Breast epithelium (tissue), 4 donors: ENCODE measurements at regions of chr2 and their contacts with region 1.

Region 1: DNA sequence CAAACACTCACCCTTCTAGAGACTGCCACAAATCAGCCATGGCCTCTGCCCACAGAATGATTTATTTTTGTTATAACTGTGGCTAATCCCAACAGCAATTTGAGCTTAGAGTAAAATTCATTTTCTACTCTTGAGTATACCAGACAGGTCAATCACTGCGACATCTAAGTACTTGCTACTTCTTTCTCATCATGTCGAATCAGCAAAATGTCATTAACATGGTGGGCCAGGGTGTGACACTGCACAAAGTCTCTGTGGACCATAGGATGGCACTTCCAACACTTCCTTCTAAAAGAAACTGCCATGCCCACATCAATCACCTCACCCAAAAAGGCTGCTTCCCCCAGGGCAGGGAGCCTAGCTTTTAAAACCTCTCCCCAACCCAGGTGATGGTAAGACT is 64.4 kb downstream of the KCNG3 start:
- DNase-seq: no peak
- H3K4me3 ChIP-seq: no peak overlapping the region
- H3K27ac ChIP-seq: no peak overlapping the region
- H3K4me1 ChIP-seq: no peaks in the 10 kb centered on the region
- H3K27me3 ChIP-seq: no peaks in the 10 kb centered on the region
- CTCF ChIP-seq: no peak
- POLR2A ChIP-seq: no peak

Region 2: DNA sequence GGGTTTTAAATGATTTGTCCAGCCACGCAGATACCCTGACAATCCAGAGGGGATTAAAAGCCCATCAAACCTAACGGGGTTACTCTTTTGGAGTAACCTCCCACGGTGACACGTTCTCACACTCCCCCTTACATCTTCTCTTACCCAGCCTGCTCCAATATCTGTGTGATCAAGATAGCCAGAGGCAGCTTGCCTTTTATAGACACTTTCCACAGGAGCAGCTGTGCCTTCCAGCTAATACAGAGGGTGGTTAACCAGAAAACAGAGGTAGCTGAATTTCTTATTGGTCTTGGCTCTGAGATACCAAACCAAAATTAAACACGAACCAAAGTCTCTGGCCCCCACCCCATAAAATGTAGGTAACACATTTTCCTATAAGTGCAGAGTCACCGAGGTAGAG is 614.4 kb before region 1 on chr2:
- intact Hi-C with region 1: no loop called
- DNase-seq: no peak
- H3K4me3 ChIP-seq: no peak overlapping the region
- H3K27ac ChIP-seq: no peak overlapping the region
- H3K4me1 ChIP-seq: no peaks in the 10 kb centered on the region
- H3K27me3 ChIP-seq: no peaks in the 10 kb centered on the region
- CTCF ChIP-seq: no peak
- POLR2A ChIP-seq: no peak

Region 3: GRCh38 chr2:41869542-41870264 is 559.6 kb before region 1 on chr2:
- intact Hi-C with region 1: no loop called
- DNase-seq: peak; percentile 41 to 73
- H3K4me3 ChIP-seq: no peak overlapping the region
- H3K27ac ChIP-seq: no peak overlapping the region
- H3K4me1 ChIP-seq: no peaks in the 10 kb centered on the region
- H3K27me3 ChIP-seq: no peaks in the 10 kb centered on the region
- CTCF ChIP-seq: peak; percentile 54 to 89 (median 86)
- POLR2A ChIP-seq: no peak

Region 4: DNA sequence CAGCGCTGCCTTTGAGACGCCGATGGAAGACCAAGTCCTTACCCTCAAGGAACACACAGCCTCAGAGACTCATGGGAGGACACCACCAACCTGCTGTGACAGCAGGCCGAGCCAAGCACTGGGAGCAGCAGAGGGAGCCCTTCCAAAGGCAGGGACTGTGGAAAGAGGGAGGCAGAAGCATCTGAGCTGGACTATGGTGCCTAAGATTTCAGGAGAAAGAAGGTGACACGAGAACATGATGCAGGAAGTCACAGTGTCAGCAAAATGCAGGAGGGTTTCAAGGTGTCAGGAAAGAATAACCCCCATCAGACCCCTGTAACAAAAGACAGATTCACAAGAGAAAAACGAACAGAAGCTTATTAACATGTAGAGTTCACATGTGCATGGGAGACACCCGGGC is 44.1 kb before region 1 on chr2:
- intact Hi-C with region 1: no loop called
- DNase-seq: no peak
- H3K4me3 ChIP-seq: no peak overlapping the region
- H3K27ac ChIP-seq: no peak overlapping the region
- H3K4me1 ChIP-seq: no peaks in the 10 kb centered on the region
- H3K27me3 ChIP-seq: no peaks in the 10 kb centered on the region
- CTCF ChIP-seq: no peak
- POLR2A ChIP-seq: no peak

Region 5: DNA sequence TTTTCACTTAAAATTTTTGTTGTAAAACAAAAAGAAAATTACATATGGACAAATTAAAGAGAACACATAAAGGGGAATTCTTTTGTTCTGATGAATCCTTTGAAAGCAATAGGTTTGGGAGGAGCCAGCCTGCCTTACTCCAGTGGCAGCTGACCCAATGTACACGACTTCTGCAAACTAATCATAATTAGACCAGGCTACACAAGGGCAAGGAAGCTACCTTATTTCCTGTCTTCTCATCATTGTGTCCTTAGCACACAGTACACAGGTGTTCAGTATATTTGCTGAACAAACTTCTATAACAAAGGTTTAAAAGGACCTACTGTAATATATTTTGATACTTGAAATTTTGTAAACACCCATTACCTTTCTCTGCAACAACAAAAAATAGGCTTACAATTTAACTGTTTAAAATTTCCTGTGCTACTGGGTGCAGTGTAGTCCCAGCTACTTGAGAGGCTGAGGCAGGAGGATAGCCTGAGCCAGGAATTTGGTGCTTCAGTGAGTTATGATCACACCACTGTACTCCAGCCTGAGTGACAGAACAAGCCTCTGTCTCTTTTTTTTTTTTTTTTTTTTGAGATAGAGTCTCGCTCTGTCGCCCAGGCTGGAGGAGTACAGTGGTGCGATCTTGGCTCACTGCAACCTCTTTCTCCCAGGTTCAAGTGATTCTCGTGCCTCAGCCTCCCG is 45.6 kb after region 1 on chr2:
- intact Hi-C with region 1: loop called (anchors 2 kb)
- DNase-seq: no peak
- H3K4me3 ChIP-seq: no peak overlapping the region
- H3K27ac ChIP-seq: no peak overlapping the region
- H3K4me1 ChIP-seq: no peaks in the 10 kb centered on the region
- H3K27me3 ChIP-seq: no peaks in the 10 kb centered on the region
- CTCF ChIP-seq: no peak
- POLR2A ChIP-seq: no peak